ENCODE measurements at regions of chr22 and their contacts with region 1.

Region 1: GRCh38 chr22:30485362-30485988 is 13.7 kb upstream of the SEC14L3 start:
- DNase-seq: peak; percentile 80
- ATAC-seq: peak; percentile 96
- H3K4me3 ChIP-seq: no peak overlapping the region
- H3K4me3 Mint-ChIP-seq: no peak overlapping the region
- H3K27ac ChIP-seq: no peak overlapping the region
- H3K27ac Mint-ChIP-seq: no peak overlapping the region
- H3K4me1 ChIP-seq: no peaks in the 10 kb centered on the region
- H3K4me1 Mint-ChIP-seq: no peaks in the 10 kb centered on the region
- H3K27me3 ChIP-seq: peaks cover 0 to 3% (median 0%) of the 10 kb centered on the region in 4 experiments
- H3K27me3 Mint-ChIP-seq: peaks cover 20% of the 10 kb centered on the region
- CTCF ChIP-seq: peak; percentile 97

Region 2: DNA sequence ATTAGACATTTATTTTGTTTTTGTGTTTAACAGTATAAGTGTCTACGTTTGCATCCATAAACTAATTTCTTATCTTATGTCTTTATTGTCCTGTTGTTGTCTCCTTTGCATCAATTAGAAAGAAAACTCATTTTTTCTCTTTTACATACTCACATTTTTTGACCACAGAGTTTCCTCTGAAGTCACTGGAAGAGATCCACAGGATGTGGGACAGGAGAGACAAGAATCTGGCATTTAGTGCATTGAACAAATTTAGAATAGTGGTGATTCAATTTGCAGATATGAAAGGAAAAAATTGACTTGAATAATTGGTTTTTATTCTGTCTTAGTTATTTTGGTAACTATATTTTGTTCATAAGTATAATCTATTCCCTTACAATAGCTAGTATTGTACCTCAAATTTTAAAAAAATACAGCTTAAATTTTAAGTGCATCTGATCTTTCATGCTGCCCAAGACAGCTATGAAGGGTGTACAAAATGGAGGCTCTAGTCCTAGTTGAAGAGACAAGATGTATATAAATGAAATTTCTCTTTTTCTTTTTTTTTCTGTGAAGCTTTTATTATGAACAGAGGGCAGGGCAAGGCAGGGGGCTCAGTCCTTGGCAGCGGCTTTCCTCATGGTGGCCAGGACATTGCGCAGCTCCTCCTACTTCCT is 380.8 kb before region 1 on chr22:
- CTCF ChIA-PET with region 1: interaction called, 15 read pairs
- POLR2A ChIA-PET with region 1: no interaction called
- intact Hi-C with region 1: loop called (anchors 1 kb)
- DNase-seq: no peak
- ATAC-seq: no peak
- H3K4me3 ChIP-seq: no peak overlapping the region
- H3K4me3 Mint-ChIP-seq: no peak overlapping the region
- H3K27ac ChIP-seq: no peak overlapping the region
- H3K27ac Mint-ChIP-seq: no peak overlapping the region
- H3K4me1 ChIP-seq: no peaks in the 10 kb centered on the region
- H3K4me1 Mint-ChIP-seq: peaks cover 5% of the 10 kb centered on the region
- H3K27me3 ChIP-seq: no peaks in the 10 kb centered on the region
- H3K27me3 Mint-ChIP-seq: peaks cover 12% of the 10 kb centered on the region
- CTCF ChIP-seq: no peak

Region 3: GRCh38 chr22:30253205-30253852 is 232.1 kb before region 1 on chr22:
- CTCF ChIA-PET with region 1: no interaction called
- POLR2A ChIA-PET with region 1: no interaction called
- intact Hi-C with region 1: loop called (anchors 1 kb)
- DNase-seq: no peak
- ATAC-seq: no peak
- H3K4me3 ChIP-seq: no peak overlapping the region
- H3K4me3 Mint-ChIP-seq: no peak overlapping the region
- H3K27ac ChIP-seq: no peak overlapping the region
- H3K27ac Mint-ChIP-seq: no peak overlapping the region
- H3K4me1 ChIP-seq: peaks cover 0 to 9% of the 10 kb centered on the region in 2 donors
- H3K4me1 Mint-ChIP-seq: peaks cover 3% of the 10 kb centered on the region
- H3K27me3 ChIP-seq: peaks cover 0 to 17% (median 4%) of the 10 kb centered on the region in 4 experiments
- H3K27me3 Mint-ChIP-seq: peaks cover 18% of the 10 kb centered on the region
- CTCF ChIP-seq: no peak

Measured in B cell (primary cell).